Caco-2 (cell line): ENCODE measurements at regions of chr9 and their contacts with region 1.

Region 1: DNA sequence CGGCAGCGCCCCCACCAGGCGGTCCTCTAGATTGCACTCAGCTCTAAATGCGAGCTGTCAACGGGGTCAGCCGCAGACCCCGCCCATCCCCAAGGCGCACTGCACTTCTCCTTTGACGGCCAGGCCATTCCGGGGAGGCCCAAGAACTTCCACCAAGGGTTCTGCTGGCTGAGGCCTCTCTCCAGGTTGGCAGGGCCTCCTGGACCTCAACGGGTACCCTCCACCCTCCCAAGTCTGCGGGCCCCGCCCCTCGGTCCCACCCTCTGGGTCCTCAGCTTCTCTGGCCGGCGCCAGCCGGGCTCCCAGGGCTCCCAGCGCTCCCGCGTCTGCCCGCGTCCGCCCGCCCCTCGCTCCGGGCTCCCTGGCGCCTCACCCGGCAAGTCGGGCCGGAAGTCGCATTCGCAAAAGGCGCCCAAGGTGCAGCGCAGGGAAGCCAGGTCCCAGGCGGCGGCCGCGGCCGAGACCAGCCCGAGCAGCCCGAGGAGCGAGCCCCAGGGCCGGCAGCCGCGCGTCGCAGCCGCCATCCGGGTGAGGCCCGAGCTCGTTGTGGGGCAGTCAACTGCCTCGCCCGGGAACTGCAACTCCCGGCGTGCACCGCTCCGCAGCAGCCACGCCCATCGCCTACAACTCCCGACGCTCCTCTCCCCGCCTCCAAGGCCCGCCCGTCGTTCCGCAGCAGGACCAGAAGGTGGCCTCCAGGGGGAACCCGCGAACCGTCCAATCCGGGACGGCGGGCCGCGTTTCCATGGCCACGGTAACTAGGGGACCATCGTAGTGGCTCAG is at the start of gene TOR2A:
- DNase-seq: peak; percentile 96 to 98
- H3K4me3 ChIP-seq: peak within 1 kb of the TSS; percentile 69
- H3K4me3 Mint-ChIP-seq: peak within 1 kb of the TSS; percentile 68
- H3K27ac Mint-ChIP-seq: no peak within 1 kb of the TSS
- H3K4me1 ChIP-seq: no peaks in the 10 kb centered on the region
- H3K4me1 Mint-ChIP-seq: no peaks in the 10 kb centered on the region
- H3K27me3 ChIP-seq: no peaks in the 10 kb centered on the region; the same call in 1 of the 2 replicates
- H3K27me3 Mint-ChIP-seq: peaks cover 10% of the 10 kb centered on the region
- CTCF ChIP-seq: peak; percentile 92
- total RNA-seq, gene TOR2A: 12.9 and 14.2 TPM in 2 replicates

Region 2: DNA sequence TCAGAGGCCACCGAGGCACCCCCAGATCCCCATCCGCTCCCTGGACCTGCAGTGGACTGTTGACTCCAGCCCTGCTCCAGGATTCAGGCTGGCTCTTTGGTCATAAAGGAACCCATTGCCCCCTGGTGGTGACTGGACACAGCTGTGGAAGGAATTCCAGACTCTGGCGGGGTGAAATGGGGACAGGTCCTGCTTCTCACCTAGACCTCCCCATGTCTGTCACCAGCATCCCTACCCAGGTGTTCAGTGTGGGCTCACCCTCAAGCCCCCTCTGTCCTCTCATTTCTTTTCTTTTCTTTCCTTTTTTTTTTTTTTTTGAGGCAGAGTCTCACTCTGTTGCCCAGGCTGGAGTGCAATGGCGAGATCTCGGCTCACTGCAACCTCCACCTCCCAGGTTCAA is 148.4 kb before region 1 on chr9:
- CTCF ChIA-PET with region 1: interaction called, 34 read pairs
- POLR2A ChIA-PET with region 1: interaction called, 4 read pairs
- intact Hi-C with region 1: loop called (anchors 1 kb)
- DNase-seq: peak; percentile 86 to 87
- H3K4me3 ChIP-seq: no peak overlapping the region
- H3K4me3 Mint-ChIP-seq: no peak overlapping the region
- H3K27ac Mint-ChIP-seq: no peak overlapping the region
- H3K4me1 ChIP-seq: peaks cover 5% of the 10 kb centered on the region
- H3K4me1 Mint-ChIP-seq: no peaks in the 10 kb centered on the region
- H3K27me3 ChIP-seq: no peaks in the 10 kb centered on the region; the same call in 1 of the 2 replicates
- H3K27me3 Mint-ChIP-seq: no peaks in the 10 kb centered on the region
- CTCF ChIP-seq: peak; percentile 83 to 93

Region 3: DNA sequence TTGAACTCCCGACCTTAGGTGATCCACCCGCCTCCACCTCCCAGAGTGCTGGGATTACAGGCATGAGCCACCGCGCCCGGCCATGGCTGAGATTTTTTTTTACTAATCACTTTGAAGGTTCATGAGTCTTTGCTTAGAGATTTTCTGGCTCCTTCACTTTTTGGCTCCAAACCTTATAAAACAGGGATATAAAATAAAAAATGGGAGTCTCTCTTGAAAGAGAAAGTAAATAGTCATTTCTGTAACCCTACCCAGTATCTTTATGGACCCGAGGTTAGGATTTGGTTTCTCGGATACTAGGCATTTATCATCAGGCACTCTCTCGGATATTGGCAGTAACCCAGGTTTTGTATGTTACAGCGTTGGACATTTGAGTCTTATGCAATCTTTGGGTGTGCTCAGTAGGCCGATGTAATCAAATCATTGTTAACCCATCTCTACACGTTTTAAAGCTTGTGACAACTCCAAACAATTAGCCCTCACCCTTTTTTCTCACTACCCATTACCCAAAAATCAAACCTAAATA is 97.6 kb before region 1 on chr9:
- CTCF ChIA-PET with region 1: no interaction called
- POLR2A ChIA-PET with region 1: no interaction called
- intact Hi-C with region 1: no loop called
- DNase-seq: no peak
- H3K4me3 ChIP-seq: no peak overlapping the region
- H3K4me3 Mint-ChIP-seq: no peak overlapping the region
- H3K27ac Mint-ChIP-seq: no peak overlapping the region
- H3K4me1 ChIP-seq: 0 out of 2 replicates have a peak, but pooled peaks cover 3% of the 10 kb centered on the region
- H3K4me1 Mint-ChIP-seq: peaks cover 8% of the 10 kb centered on the region
- H3K27me3 ChIP-seq: no peaks in the 10 kb centered on the region; the same call in 1 of the 2 replicates
- H3K27me3 Mint-ChIP-seq: no peaks in the 10 kb centered on the region
- CTCF ChIP-seq: no peak

Region 4: DNA sequence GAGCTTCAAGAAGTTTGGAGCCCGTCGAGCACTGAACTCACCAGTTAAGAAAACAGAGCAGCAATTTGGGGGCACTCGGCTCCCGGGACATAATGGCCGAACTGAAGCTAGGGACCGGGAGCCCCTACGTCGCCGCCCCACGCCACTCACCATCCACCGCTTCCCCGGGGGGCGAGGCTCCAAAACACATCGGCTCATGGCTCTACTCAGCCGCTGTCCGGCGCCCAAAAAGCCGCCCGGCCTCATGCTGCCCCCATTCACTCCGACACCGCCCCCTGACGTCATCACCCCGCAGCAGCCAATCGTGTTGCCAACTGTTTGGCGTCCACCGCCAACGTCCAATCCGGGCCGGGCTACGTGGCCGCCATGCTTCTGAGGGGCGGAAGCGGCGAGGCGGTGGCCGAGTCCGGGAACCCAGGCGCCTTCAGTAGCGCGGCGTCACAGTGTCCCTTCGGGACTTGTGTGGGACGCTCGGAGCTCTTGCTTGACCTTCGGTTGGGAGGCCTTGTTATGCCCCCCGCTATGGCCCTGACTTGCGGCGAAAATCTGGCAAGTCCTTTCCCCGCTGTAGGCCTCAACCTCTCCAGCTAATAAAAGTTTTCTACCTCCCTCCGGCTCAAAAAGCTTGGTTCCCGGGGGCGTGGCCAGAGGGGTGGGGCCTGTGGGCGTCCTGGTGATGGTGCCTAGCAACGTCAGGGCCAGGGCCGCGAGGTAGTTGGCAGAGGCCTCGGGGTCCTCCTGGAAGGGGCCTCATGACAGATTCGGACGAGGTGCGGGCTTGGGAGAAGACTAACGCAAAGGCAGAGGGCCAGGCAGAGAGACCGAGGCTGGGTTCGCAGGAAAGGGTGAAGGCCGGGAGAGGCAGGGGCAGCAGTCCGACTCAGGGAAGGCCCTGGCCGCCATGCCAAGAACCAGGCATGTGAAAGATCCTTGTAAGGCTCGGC is 19.3 kb before region 1 on chr9 and contains the starts of genes PTRH1 and TTC16:
- CTCF ChIA-PET with region 1: interaction called, 21 read pairs
- POLR2A ChIA-PET with region 1: no interaction called
- intact Hi-C with region 1: no loop called
- DNase-seq: peak; percentile 95 to 97
- H3K4me3 ChIP-seq: peak within 1 kb of the TSS; percentile 71
- H3K4me3 Mint-ChIP-seq: peak within 1 kb of the TSS; percentile 85
- H3K27ac Mint-ChIP-seq: peak within 1 kb of the TSS; percentile 83
- H3K4me1 ChIP-seq: peaks cover 4% of the 10 kb centered on the region; the same call in 1 of the 2 replicates
- H3K4me1 Mint-ChIP-seq: peaks cover 7% of the 10 kb centered on the region
- H3K27me3 ChIP-seq: no peaks in the 10 kb centered on the region
- H3K27me3 Mint-ChIP-seq: no peaks in the 10 kb centered on the region
- CTCF ChIP-seq: no peak
- total RNA-seq, gene PTRH1: 8.7 and 11.2 TPM in 2 replicates
- total RNA-seq, gene TTC16: not detected in 2 replicates

Region 5: GRCh38 chr9:127785023-127785932 is 50.3 kb after region 1 on chr9:
- CTCF ChIA-PET with region 1: interaction called, 30 read pairs
- POLR2A ChIA-PET with region 1: interaction called, 10 read pairs
- intact Hi-C with region 1: loop called (anchors 1 kb)
- DNase-seq: peak; percentile 87 to 91
- H3K4me3 ChIP-seq: peak overlapping the region; percentile 94
- H3K4me3 Mint-ChIP-seq: peak overlapping the region; percentile 98
- H3K27ac Mint-ChIP-seq: peak overlapping the region; percentile 71
- H3K4me1 ChIP-seq: no peaks in the 10 kb centered on the region
- H3K4me1 Mint-ChIP-seq: no peaks in the 10 kb centered on the region
- H3K27me3 ChIP-seq: no peaks in the 10 kb centered on the region
- H3K27me3 Mint-ChIP-seq: no peaks in the 10 kb centered on the region
- CTCF ChIP-seq: peak; percentile 91 to 92

Region 6: DNA sequence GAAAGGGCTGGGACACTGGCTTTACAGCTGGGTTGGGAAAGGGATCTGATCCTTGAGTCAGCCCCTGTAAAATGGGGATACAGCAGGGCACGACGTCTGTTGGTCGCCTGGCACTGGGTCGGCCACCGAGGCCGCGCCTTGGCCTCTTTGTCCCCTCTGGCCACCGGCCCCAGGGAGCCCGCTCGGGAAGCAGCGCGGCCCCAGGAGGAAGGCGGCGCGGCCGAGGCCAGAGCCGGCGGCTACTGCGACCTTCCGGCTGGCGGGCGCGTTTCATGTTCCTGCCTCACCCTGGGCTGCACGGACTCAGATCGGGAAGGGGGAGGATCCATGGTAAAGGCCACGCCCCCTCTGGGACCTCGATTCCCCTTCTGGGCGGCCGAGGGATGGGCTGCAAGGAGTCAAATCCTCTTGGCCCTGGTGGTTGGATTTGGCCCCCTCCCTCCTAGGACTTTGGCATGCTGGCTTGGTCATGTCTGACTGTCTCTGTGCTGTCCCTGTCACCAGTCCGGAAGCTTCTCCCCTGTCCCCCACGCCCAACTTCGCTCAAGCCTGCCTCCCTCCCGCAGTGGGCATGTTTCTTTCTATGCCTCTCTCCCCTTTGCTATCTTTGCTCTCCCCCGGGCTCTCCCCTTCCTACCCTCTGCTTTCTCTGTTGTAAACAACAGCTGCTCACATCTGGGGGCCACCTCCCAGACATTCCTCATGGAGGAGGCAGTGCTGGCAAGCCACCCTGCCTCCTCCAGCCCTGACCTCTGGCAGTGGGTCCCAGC is 93.5 kb after region 1 on chr9:
- CTCF ChIA-PET with region 1: no interaction called
- POLR2A ChIA-PET with region 1: no interaction called
- intact Hi-C with region 1: no loop called
- DNase-seq: peak; percentile 76 to 82
- H3K4me3 ChIP-seq: peak overlapping the region; percentile 30
- H3K4me3 Mint-ChIP-seq: peak overlapping the region; percentile 63
- H3K27ac Mint-ChIP-seq: peak overlapping the region; percentile 9
- H3K4me1 ChIP-seq: no peaks in the 10 kb centered on the region
- H3K4me1 Mint-ChIP-seq: peaks cover 10% of the 10 kb centered on the region
- H3K27me3 ChIP-seq: no peaks in the 10 kb centered on the region
- H3K27me3 Mint-ChIP-seq: no peaks in the 10 kb centered on the region
- CTCF ChIP-seq: no peak

Region 7: GRCh38 chr9:127878652-127879395 is 143.9 kb after region 1 on chr9:
- CTCF ChIA-PET with region 1: no interaction called
- POLR2A ChIA-PET with region 1: no interaction called
- intact Hi-C with region 1: no loop called
- DNase-seq: no peak
- H3K4me3 ChIP-seq: no peak overlapping the region
- H3K4me3 Mint-ChIP-seq: peak overlapping the region; percentile 79
- H3K27ac Mint-ChIP-seq: peak overlapping the region; percentile 43
- H3K4me1 ChIP-seq: peaks cover 10% of the 10 kb centered on the region; the same call in 1 of the 2 replicates
- H3K4me1 Mint-ChIP-seq: peaks cover 4% of the 10 kb centered on the region
- H3K27me3 ChIP-seq: no peaks in the 10 kb centered on the region
- H3K27me3 Mint-ChIP-seq: no peaks in the 10 kb centered on the region
- CTCF ChIP-seq: no peak

Region 8: GRCh38 chr9:127916665-127917613 is 182.0 kb after region 1 on chr9 and contains the start of gene ST6GALNAC4:
- CTCF ChIA-PET with region 1: interaction called, 12 read pairs
- POLR2A ChIA-PET with region 1: interaction called, 7 read pairs
- intact Hi-C with region 1: loop called (anchors 5 kb)
- DNase-seq: peak; percentile 91 to 94
- H3K4me3 ChIP-seq: peak within 1 kb of the TSS; percentile 62
- H3K4me3 Mint-ChIP-seq: peak within 1 kb of the TSS; percentile 72
- H3K27ac Mint-ChIP-seq: no peak within 1 kb of the TSS
- H3K4me1 ChIP-seq: peaks cover 48% of the 10 kb centered on the region
- H3K4me1 Mint-ChIP-seq: peaks cover 7% of the 10 kb centered on the region
- H3K27me3 ChIP-seq: no peaks in the 10 kb centered on the region
- H3K27me3 Mint-ChIP-seq: no peaks in the 10 kb centered on the region
- CTCF ChIP-seq: no peak
- total RNA-seq, gene ST6GALNAC4: 12.1 and 13.2 TPM in 2 replicates